ENCODE measurements at regions of chr14 and their contacts with region 1.

Region 1: DNA sequence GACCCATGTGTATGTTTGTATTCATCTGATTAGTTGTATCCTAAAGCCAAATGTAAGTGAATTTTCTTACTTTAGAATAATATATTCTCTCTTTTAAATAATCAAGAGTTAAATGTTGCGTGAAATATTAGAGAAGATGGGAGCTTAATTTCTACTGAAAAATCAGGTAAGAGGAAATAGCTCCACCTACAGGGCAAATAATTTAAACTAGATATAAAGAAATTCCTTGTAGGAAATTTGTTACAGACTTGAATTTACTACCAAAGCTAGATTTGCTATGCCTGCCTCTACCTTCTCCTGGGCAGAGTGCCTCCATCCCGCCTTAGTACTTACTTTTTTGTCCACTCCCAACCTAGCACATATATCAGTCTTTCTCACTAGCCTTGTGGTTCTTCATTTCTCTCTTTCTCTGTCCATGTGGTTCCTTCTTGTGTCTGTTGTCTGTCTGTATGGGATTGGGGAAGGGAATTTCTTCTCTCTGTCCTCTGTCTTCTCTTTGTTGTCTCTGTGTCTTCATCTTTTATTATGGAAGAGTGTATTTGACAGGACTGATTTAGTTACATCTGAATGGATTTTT is 44.7 kb downstream of the PALS1 start:
- DNase-seq: no peak
- H3K4me3 Mint-ChIP-seq: no peak overlapping the region
- H3K27ac Mint-ChIP-seq: no peak overlapping the region
- H3K4me1 Mint-ChIP-seq: no peaks in the 10 kb centered on the region
- H3K27me3 Mint-ChIP-seq: no peaks in the 10 kb centered on the region

Region 2: GRCh38 chr14:66495218-66496098 is 790.5 kb before region 1 on chr14:
- CTCF ChIA-PET with region 1: interaction called, 3 read pairs
- POLR2A ChIA-PET with region 1: no interaction called
- intact Hi-C with region 1: loop called (anchors 5 kb)
- DNase-seq: peak; percentile 41
- H3K4me3 Mint-ChIP-seq: no peak overlapping the region
- H3K27ac Mint-ChIP-seq: no peak overlapping the region
- H3K4me1 Mint-ChIP-seq: peaks cover 12% of the 10 kb centered on the region
- H3K27me3 Mint-ChIP-seq: peaks cover 1% of the 10 kb centered on the region

Region 3: DNA sequence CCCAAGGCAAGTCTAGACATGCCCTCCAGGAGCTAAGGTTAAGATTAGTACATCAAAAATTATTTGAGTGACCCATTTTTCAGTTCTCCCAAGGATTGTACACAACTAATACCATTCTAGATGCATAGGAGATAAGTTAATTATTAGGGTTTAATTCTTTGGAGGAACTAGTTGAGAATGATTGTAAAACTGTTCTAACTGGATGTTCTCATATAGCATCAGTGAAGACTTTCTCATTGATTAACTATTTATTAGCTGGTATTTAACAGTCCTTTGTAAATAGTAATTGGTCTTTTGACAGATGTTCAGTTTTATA is 353.2 kb before region 1 on chr14:
- CTCF ChIA-PET with region 1: no interaction called
- POLR2A ChIA-PET with region 1: no interaction called
- intact Hi-C with region 1: no loop called
- DNase-seq: no peak
- H3K4me3 Mint-ChIP-seq: no peak overlapping the region
- H3K27ac Mint-ChIP-seq: no peak overlapping the region
- H3K4me1 Mint-ChIP-seq: no peaks in the 10 kb centered on the region
- H3K27me3 Mint-ChIP-seq: no peaks in the 10 kb centered on the region

Region 4: GRCh38 chr14:67166450-67166853 is 119.5 kb before region 1 on chr14:
- CTCF ChIA-PET with region 1: interaction called, 100 read pairs
- POLR2A ChIA-PET with region 1: interaction called, 5 read pairs
- intact Hi-C with region 1: loop called (anchors 1 kb)
- DNase-seq: peak; percentile 35
- H3K4me3 Mint-ChIP-seq: no peak overlapping the region
- H3K27ac Mint-ChIP-seq: no peak overlapping the region
- H3K4me1 Mint-ChIP-seq: peaks cover 2% of the 10 kb centered on the region
- H3K27me3 Mint-ChIP-seq: no peaks in the 10 kb centered on the region

Region 5: DNA sequence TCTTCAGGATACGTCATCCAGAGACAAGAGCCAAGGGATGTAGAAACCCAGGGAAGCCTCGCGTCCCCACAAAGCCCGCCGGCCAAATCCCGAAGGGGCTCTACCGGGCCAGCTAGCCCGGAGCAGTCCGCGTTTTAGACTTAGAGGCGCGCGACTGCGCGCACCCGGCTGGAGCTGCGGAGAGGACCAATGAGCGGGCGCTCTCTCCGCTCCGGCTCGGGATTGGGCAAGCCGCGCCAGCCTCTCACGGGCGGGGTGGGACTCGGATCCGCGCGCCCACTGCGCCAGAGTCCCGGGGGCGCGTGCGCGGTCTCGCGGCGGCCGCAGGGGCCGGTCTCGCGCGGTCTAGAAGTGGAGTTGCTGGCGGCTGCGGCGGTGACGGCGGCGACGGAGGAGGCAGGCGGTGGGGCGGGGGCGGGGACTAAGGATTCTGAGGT is 45.0 kb before region 1 on chr14:
- CTCF ChIA-PET with region 1: interaction called, 4 read pairs
- POLR2A ChIA-PET with region 1: interaction called, 3 read pairs
- intact Hi-C with region 1: loop called (anchors 5 kb)
- DNase-seq: peak; percentile 96
- H3K4me3 Mint-ChIP-seq: peak overlapping the region; percentile 82
- H3K27ac Mint-ChIP-seq: peak overlapping the region; percentile 83
- H3K4me1 Mint-ChIP-seq: peaks cover 8% of the 10 kb centered on the region
- H3K27me3 Mint-ChIP-seq: no peaks in the 10 kb centered on the region

Region 6: GRCh38 chr14:67335781-67336180 is 49.8 kb after region 1 on chr14:
- CTCF ChIA-PET with region 1: interaction called, 11 read pairs
- POLR2A ChIA-PET with region 1: no interaction called
- intact Hi-C with region 1: no loop called
- DNase-seq: no peak
- H3K4me3 Mint-ChIP-seq: no peak overlapping the region
- H3K27ac Mint-ChIP-seq: no peak overlapping the region
- H3K4me1 Mint-ChIP-seq: no peaks in the 10 kb centered on the region
- H3K27me3 Mint-ChIP-seq: no peaks in the 10 kb centered on the region

Measured in activated CD4-positive, alpha-beta memory T cell treated with anti-CD3 and anti-CD28 coated beads for 36 hours (primary cell).